Sciatic nerve (tissue), 2 donors: ENCODE measurements at regions of chr18 and their contacts with region 1.

Region 1: DNA sequence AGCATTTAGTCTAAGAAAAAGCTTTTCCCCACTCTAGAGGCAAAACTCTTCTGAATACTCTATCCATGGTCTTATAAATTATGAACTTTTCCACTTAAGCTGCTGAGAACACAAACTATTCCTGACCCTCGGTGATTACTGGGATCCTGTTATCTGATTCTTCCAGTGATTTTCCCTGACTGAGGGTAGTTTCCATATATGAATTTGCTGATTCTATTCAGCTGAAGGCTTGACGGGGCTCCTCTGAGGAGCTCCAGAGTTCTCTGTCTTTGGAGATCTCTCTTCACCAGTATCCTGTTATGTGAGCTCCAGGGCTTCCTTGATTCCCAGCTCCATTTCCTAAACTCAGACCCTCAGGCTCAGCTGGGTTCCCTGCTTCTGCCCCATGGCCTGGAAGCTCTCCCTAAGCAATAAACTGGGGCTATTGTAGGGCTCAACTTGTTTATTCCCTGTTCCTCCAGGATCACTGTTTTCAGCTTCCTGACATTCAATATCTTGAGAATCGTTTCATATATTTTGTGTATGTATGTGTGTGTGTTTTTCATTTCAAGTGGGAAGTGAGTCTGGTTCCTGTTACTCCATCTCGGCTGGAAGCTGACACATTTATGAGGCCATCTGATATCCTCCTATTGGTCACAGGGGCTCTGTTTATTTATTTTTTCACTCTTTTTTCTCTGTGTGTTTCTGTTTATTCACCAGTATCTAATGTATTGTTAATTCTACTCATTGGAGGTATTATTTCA is 78.2 kb downstream of the ARHGAP28 start:
- DNase-seq: no peak
- ATAC-seq: no peak

Region 2: GRCh38 chr18:7104649-7105048 is 297.0 kb after region 1 on chr18:
- intact Hi-C with region 1: loop called (anchors 2 kb)
- DNase-seq: no peak
- ATAC-seq: no peak